ENCODE measurements at regions of chr7 and their contacts with region 1.

Region 1: DNA sequence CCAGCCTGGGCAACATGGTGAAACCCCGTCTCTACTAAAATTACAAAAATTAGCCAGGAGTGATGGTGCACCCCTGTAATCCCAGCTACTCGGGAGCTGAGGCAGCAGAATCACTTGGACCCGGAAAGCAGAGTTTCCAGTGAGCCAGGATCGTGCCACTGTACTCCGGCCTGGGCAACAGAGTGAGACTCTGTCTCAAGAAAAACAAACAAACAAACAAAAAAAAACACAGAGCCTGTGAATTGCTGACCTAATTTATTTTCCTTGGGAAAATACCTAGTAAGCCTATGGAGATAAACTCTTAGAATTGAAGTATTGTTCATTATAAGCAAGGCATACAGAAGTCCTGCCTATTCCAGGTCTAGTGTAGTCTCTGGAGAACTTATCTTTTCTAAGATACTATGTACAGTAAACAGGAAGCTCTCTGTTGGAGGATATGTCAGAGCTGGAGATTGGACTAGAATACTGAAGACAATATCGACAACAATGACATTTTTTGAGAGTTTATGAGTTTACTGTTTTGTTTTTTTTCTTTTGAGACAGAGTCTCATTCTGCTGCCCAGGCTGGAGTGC is 14.9 kb downstream of the GTF2I start:
- DNase-seq: no peak
- ATAC-seq: peak in 2 of 8 donors; percentile 53 to 64
- H3K4me3 ChIP-seq: no peak overlapping the region
- H3K27ac ChIP-seq: peak overlapping the region in 3 of 10 donors; percentile 16 to 54 (median 52)
- H3K4me1 ChIP-seq: peaks cover 6 to 67% (median 31%) of the 10 kb centered on the region in 9 donors
- H3K27me3 ChIP-seq: no peaks in the 10 kb centered on the region
- CTCF ChIP-seq: no peak

Region 2: DNA sequence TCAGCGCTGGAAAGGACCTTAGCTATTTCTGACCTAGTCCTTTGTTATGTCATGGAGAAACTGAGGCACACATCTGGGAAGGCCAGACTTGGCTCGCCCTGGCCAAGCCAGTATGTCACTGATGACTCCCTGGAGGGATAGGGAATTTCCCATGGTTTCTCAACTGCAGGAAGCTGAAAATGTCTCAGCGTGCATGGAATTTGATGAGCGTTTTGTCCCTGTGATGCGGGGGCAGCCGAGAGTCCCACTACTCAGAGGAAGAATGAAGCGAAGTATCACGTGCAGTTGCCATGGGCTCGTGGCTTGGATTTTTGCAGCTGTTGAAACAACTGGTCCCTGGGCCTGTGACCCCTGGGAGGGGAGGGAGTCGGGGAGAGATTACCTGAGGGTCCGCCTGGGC is 338.4 kb before region 1 on chr7:
- intact Hi-C with region 1: no loop called
- DNase-seq: peak in 1 of 2 donors; percentile 37
- ATAC-seq: peak; percentile 17 to 69 (median 60)
- H3K4me3 ChIP-seq: no peak overlapping the region
- H3K27ac ChIP-seq: no peak overlapping the region
- H3K4me1 ChIP-seq: peaks cover 0 to 11% (median 6%) of the 10 kb centered on the region in 9 donors
- H3K27me3 ChIP-seq: no peaks in the 10 kb centered on the region
- CTCF ChIP-seq: no peak

Region 3: DNA sequence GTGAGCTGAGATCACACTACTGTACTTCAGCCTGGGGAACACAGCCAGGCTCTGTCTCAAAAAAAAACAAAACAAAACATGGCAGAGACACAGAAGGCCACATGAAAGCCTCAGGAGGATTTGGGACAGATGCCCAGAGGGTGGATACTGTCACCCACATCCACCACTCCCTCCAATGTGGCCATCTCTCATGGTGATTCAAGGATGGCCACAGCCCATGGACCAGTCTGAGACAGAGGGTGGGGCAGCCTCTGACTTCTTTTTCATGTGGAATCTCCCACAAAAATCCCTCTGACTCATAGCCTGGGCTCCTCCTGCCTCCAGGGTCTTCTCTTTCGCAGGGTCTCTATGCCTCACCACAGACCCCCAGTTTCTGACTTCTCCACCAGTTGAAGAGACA is 73.9 kb before region 1 on chr7:
- intact Hi-C with region 1: no loop called
- DNase-seq: no peak
- ATAC-seq: peak in 1 of 8 donors; percentile 25
- H3K4me3 ChIP-seq: no peak overlapping the region
- H3K27ac ChIP-seq: no peak overlapping the region
- H3K4me1 ChIP-seq: no peaks in the 10 kb centered on the region
- H3K27me3 ChIP-seq: no peaks in the 10 kb centered on the region
- CTCF ChIP-seq: no peak

Region 4: GRCh38 chr7:74612015-74612829 is 60.2 kb before region 1 on chr7:
- intact Hi-C with region 1: no loop called
- DNase-seq: peak in 1 of 2 donors; percentile 17
- ATAC-seq: peak in 5 of 8 donors; percentile 30 to 69 (median 39)
- H3K4me3 ChIP-seq: no peak overlapping the region
- H3K27ac ChIP-seq: peak overlapping the region in 1 of 10 donors; percentile 11
- H3K4me1 ChIP-seq: peaks cover 0 to 11% (median under 1%) of the 10 kb centered on the region in 9 donors
- H3K27me3 ChIP-seq: no peaks in the 10 kb centered on the region
- CTCF ChIP-seq: no peak

Region 5: GRCh38 chr7:74722153-74722552 is 49.7 kb after region 1 on chr7:
- intact Hi-C with region 1: loop called in 2 of 10 experiments (anchors 10 kb)
- DNase-seq: no peak
- ATAC-seq: no peak
- H3K4me3 ChIP-seq: no peak overlapping the region
- H3K27ac ChIP-seq: no peak overlapping the region
- H3K4me1 ChIP-seq: peaks cover 0 to 6% (median 3%) of the 10 kb centered on the region in 9 donors
- H3K27me3 ChIP-seq: no peaks in the 10 kb centered on the region
- CTCF ChIP-seq: no peak